ENCODE measurements at regions of chr20 and their contacts with region 1.

Region 1: DNA sequence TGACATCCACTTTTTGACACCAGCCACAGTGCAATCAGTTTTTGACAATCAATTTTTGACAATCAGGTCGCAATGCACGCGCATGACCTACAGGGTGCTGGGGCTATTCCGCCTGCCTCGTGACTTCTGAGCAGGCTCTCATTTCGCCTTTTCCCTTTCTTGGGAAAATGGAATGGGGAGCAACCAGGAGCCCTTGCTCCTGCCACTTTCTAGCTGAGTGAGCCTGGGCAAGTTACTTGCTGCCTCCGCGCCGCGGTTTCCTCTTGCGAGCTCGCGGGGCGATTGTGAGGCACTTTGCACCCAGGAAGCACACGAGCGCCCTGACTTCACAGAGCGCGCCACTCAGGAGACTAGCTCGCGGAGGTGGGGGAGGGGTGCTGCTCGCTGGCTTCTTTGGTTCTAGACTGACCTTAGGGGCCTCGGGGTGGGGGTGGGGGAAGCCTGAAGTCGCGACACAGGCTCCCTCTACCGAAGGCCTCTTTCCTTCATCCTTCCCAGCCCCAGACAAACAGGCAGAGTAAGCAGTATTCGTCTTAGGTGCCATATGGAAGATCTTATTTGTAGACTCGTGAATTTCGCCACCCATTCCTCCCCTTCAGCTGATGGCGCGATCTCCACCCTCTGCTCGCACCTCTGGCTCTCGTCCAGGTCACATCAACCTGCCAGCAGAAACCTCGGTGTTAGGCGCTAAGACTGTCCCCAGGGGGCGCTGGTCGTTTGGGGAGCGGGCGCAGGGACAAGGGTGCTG is 4.6 kb downstream of the TP53TG5 start:
- DNase-seq: peak; percentile 94
- ATAC-seq: peak; percentile 89
- H3K4me3 Mint-ChIP-seq: peak overlapping the region; percentile 73
- H3K27ac Mint-ChIP-seq: no peak overlapping the region
- H3K4me1 Mint-ChIP-seq: peaks cover 13% of the 10 kb centered on the region
- H3K27me3 Mint-ChIP-seq: peaks cover 6% of the 10 kb centered on the region
- CTCF ChIP-seq: peak; percentile 92

Region 2: GRCh38 chr20:45253260-45253659 is 120.3 kb before region 1 on chr20:
- CTCF ChIA-PET with region 1: no interaction called
- POLR2A ChIA-PET with region 1: no interaction called
- DNase-seq: no peak
- ATAC-seq: no peak
- H3K4me3 Mint-ChIP-seq: no peak overlapping the region
- H3K27ac Mint-ChIP-seq: no peak overlapping the region
- H3K4me1 Mint-ChIP-seq: peaks cover under 1% of the 10 kb centered on the region
- H3K27me3 Mint-ChIP-seq: peaks cover 5% of the 10 kb centered on the region; the same call in 1 of the 2 replicates
- CTCF ChIP-seq: no peak

Region 3: DNA sequence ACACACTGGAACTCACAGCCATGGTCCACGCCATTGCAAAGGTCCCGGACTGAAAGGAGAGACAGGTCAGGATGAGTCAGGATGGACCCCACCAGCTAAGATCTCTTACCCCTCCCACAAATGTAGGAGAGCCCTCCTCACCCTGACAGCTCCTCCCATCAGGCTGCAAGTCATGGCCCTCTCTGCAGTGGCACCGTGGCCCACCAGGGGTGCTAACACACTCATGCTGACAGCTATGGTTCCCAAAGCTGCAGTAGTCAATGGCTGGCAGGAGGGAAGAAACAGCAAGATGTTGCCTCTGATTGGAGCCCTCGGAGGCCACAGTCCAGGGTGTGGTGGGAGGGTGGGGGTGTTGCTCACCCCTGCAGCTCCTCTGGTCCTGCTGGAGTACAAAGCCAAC is 72.6 kb before region 1 on chr20:
- CTCF ChIA-PET with region 1: interaction called, 12 read pairs
- POLR2A ChIA-PET with region 1: no interaction called
- DNase-seq: peak; percentile 82
- ATAC-seq: peak; percentile 96
- H3K4me3 Mint-ChIP-seq: no peak overlapping the region
- H3K27ac Mint-ChIP-seq: no peak overlapping the region
- H3K4me1 Mint-ChIP-seq: peaks cover 12% of the 10 kb centered on the region
- H3K27me3 Mint-ChIP-seq: peaks cover 10% of the 10 kb centered on the region
- CTCF ChIP-seq: peak; percentile 38; the same call in 1 of the 2 replicates

Region 4: DNA sequence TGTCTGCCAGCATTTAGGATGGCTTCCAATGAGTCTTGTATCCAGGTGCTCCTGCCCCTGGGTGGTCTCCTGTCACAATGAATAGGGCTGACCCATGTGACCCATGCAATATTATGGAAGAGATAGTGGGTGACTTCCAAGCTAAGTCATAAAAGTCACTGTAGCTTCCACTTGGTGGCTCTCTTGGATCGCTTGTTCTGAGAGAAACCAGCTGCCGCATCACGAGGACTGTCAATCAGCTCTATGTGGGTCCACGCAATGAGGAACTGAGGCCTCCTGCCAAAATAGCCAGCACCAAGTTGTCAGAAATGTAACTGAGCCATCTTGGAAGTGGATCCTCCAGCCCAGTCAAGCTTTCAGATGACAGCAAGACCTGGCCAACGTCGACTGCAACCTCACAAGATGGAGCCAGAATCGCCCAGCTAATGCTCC is 50.6 kb before region 1 on chr20:
- CTCF ChIA-PET with region 1: interaction called, 48 read pairs
- POLR2A ChIA-PET with region 1: interaction called, 3 read pairs
- DNase-seq: no peak
- ATAC-seq: peak; percentile 49
- H3K4me3 Mint-ChIP-seq: no peak overlapping the region
- H3K27ac Mint-ChIP-seq: no peak overlapping the region
- H3K4me1 Mint-ChIP-seq: peaks cover 2% of the 10 kb centered on the region; the same call in 1 of the 2 replicates
- H3K27me3 Mint-ChIP-seq: no peaks in the 10 kb centered on the region
- CTCF ChIP-seq: no peak

Region 5: DNA sequence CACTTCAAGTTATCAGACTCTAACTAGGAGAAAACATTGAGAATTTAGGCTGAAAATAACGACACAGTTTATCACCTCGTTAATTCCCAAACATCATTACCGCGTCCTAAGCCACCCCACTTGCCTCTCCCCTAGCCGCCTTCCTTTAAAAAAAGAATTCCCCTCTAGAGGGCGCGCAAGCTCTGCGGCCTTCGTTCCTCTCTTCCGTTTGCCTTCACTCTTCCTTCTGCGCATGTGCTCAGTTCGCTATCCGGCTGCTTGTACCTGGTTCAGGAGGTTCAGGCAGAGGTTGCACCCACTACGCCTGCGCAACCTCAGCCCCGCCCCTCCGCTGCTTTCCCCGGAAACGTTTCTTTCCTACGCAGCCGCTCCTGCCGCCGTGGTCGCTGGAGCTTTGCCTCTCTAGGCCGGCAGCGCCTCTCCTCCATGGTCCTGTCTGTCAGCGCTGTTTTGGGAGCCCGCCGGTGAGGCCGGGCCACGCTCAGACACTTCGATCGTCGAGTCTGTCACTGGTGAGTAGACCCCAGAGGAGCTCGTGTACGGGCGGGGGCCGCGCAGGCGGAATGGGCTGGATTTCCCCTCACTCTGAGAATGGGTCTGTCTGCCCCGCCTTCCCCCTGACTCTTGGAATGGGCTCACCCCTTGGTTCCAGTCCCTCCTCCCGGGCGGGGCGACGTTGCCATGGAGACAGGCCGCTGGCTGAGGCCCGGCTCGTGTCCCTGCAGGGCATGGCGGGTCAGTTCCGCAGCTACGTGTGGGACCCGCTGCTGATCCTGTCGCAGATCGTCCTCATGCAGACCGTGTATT is 10.5 kb before region 1 on chr20 and contains the start of gene SYS1:
- CTCF ChIA-PET with region 1: interaction called, 152 read pairs
- POLR2A ChIA-PET with region 1: interaction called, 6 read pairs
- DNase-seq: peak; percentile 99
- ATAC-seq: peak; percentile 89
- H3K4me3 Mint-ChIP-seq: peak within 1 kb of the TSS; percentile 97
- H3K27ac Mint-ChIP-seq: peak within 1 kb of the TSS; percentile 98
- H3K4me1 Mint-ChIP-seq: peaks cover 25% of the 10 kb centered on the region
- H3K27me3 Mint-ChIP-seq: no peaks in the 10 kb centered on the region
- CTCF ChIP-seq: peak; percentile 77
- total RNA-seq, gene SYS1: 15.4 to 20.1 TPM (median 16.4 TPM) in 3 replicates

Region 6: DNA sequence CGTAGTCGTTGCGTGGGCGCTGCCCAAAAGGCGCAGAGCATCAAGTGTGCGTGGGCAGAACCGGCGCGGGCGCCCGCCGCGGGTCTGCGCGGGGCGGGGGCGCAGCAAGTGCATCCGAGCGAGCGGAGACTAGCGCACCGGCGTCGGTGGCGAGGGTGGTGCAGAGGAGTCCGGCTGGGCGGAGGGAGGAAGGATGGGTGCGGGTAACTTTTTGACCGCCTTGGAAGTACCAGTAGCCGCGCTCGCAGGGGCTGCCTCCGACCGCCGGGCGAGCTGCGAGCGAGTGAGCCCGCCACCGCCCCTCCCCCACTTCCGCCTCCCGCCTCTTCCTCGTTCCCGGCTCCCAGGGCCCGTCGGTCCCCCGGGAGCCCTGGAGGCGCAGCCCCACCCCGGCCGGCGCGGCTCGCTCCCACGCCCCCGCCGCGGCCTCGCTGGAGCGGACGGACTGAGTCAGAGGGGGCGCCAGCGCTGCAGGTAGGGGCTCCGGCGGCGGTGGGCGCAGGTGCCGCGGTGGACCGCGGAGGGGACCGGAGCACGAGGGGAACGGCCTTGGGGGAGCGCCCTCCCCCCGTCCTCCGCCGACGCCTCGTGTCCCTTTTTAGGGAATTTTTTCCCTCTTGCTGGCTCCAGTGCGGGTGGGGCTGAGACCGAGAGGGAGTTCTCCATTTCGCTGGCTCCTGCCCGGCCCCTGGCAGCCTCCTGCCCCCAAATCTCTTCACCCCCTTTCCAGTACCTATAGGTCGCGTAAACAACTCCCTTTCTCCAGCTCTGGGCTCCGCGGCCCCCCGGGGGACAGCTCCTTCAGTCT is 32.9 kb after region 1 on chr20:
- CTCF ChIA-PET with region 1: interaction called, 56 read pairs
- POLR2A ChIA-PET with region 1: interaction called, 9 read pairs
- DNase-seq: peak; percentile 76
- ATAC-seq: peak; percentile 50
- H3K4me3 Mint-ChIP-seq: peak overlapping the region; percentile 84
- H3K27ac Mint-ChIP-seq: peak overlapping the region; percentile 86; the same call in 1 of the 2 replicates
- H3K4me1 Mint-ChIP-seq: peaks cover 12% of the 10 kb centered on the region
- H3K27me3 Mint-ChIP-seq: peaks cover 29% of the 10 kb centered on the region
- CTCF ChIP-seq: no peak

Region 7: GRCh38 chr20:45436732-45437391 is 63.3 kb after region 1 on chr20:
- CTCF ChIA-PET with region 1: interaction called, 164 read pairs
- POLR2A ChIA-PET with region 1: interaction called, 7 read pairs
- DNase-seq: peak; percentile 90
- ATAC-seq: peak; percentile 97
- H3K4me3 Mint-ChIP-seq: peak overlapping the region; percentile 82
- H3K27ac Mint-ChIP-seq: no peak overlapping the region
- H3K4me1 Mint-ChIP-seq: peaks cover 16% of the 10 kb centered on the region
- H3K27me3 Mint-ChIP-seq: peaks cover 5% of the 10 kb centered on the region; the same call in 1 of the 2 replicates
- CTCF ChIP-seq: peak; percentile 92

Region 8: GRCh38 chr20:45470262-45470931 is 96.9 kb after region 1 on chr20:
- CTCF ChIA-PET with region 1: interaction called, 14 read pairs
- POLR2A ChIA-PET with region 1: no interaction called
- DNase-seq: peak; percentile 69
- ATAC-seq: peak; percentile 63
- H3K4me3 Mint-ChIP-seq: peak overlapping the region; percentile 77
- H3K27ac Mint-ChIP-seq: peak overlapping the region; percentile 92
- H3K4me1 Mint-ChIP-seq: peaks cover 45% of the 10 kb centered on the region
- H3K27me3 Mint-ChIP-seq: peaks cover 7% of the 10 kb centered on the region
- CTCF ChIP-seq: no peak

Measured in WTC11 (cell line).